Endothelial cell of umbilical vein (primary cell): ENCODE measurements at regions of chr12 and their contacts with region 1.

Region 1: DNA sequence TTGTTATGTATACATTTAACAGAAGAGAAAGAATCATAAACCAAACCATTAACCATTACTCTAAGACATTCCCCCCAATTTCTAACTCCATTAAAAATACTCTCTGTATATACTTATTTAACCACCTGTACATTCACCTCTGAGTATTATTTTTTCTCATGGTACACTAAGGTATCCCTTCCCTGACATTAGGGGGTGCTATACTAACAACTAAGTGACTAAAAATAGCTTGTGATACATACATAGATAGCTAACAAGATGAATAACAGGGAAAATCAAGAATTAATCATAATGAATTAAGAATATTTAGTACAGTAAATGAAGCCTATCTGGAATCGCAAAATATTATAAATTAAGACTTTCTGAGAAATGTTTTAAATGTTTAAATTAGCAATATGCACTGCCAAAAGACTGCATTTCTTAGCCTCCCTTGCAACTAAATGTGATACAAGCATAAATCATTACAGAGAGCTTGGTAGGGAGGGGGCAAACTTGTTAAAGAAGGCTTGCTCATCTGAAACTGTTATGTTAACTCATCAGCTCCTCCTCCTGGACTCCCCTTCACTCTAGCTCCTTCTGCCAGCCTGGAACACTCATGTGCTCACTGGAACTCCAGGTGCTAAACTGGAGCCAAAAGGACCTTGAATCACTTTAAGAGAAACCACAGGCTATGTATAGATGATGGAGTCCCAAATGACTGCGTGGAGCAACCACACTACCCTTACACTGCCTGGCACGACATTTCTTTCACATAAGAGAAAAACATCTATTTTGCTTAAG is 14.9 kb downstream of the C2CD5 start:
- DNase-seq: peak; percentile 36
- H3K4me3 ChIP-seq: no peak overlapping the region
- H3K27ac ChIP-seq: peak overlapping the region; percentile 75
- H3K4me1 ChIP-seq: peaks cover 43% of the 10 kb centered on the region
- H3K27me3 ChIP-seq: no peaks in the 10 kb centered on the region
- CTCF ChIP-seq: peak in 1 of 2 donors; percentile 15
- POLR2A ChIP-seq: no peak

Region 2: GRCh38 chr12:22518067-22518719 is 11.3 kb before region 1 on chr12:
- CTCF ChIA-PET with region 1: interaction called, 27 read pairs
- POLR2A ChIA-PET with region 1: no interaction called
- dilution Hi-C with region 1: no loop called
- intact Hi-C with region 1: no loop called
- DNase-seq: peak; percentile 86
- H3K4me3 ChIP-seq: no peak overlapping the region
- H3K27ac ChIP-seq: no peak overlapping the region
- H3K4me1 ChIP-seq: peaks cover 8% of the 10 kb centered on the region
- H3K27me3 ChIP-seq: no peaks in the 10 kb centered on the region
- CTCF ChIP-seq: no peak
- POLR2A ChIP-seq: no peak

Region 3: GRCh38 chr12:22615963-22616501 is 86.6 kb after region 1 on chr12:
- CTCF ChIA-PET with region 1: no interaction called
- POLR2A ChIA-PET with region 1: no interaction called
- dilution Hi-C with region 1: no loop called
- intact Hi-C with region 1: no loop called
- DNase-seq: no peak
- H3K4me3 ChIP-seq: no peak overlapping the region
- H3K27ac ChIP-seq: no peak overlapping the region
- H3K4me1 ChIP-seq: no peaks in the 10 kb centered on the region
- H3K27me3 ChIP-seq: peaks cover 9 to 11% of the 10 kb centered on the region in 2 experiments
- CTCF ChIP-seq: no peak
- POLR2A ChIP-seq: no peak

Region 4: GRCh38 chr12:22880807-22881206 is 351.3 kb after region 1 on chr12:
- CTCF ChIA-PET with region 1: no interaction called
- POLR2A ChIA-PET with region 1: no interaction called
- dilution Hi-C with region 1: no loop called
- intact Hi-C with region 1: no loop called
- DNase-seq: no peak
- H3K4me3 ChIP-seq: no peak overlapping the region
- H3K27ac ChIP-seq: no peak overlapping the region
- H3K4me1 ChIP-seq: no peaks in the 10 kb centered on the region
- H3K27me3 ChIP-seq: no peaks in the 10 kb centered on the region
- CTCF ChIP-seq: no peak
- POLR2A ChIP-seq: no peak

Region 5: GRCh38 chr12:22938323-22938722 is 408.9 kb after region 1 on chr12:
- CTCF ChIA-PET with region 1: no interaction called
- POLR2A ChIA-PET with region 1: no interaction called
- dilution Hi-C with region 1: no loop called
- intact Hi-C with region 1: no loop called
- DNase-seq: no peak
- H3K4me3 ChIP-seq: no peak overlapping the region
- H3K27ac ChIP-seq: no peak overlapping the region
- H3K4me1 ChIP-seq: no peaks in the 10 kb centered on the region
- H3K27me3 ChIP-seq: no peaks in the 10 kb centered on the region
- CTCF ChIP-seq: no peak
- POLR2A ChIP-seq: no peak